ENCODE measurements at regions of chr1 and their contacts with region 1.

Region 1: DNA sequence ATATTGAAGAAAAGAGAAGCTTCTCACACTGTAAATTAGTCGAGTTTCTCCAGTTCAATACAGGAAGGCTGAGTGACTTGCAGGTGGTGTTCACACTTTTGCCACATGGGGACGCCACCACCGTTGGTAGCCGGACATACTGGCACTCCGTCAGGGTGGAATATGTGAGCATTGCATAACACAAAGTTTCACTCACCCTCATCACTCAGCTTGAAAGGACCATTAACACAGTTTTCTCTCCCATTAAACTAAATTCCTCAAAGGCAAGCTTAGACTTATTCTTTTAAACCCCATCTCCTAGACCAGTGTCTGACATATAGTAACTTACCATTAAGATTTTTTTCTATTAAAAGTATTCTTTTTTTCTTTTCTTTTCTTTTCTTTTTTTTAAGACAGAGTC is 105.3 kb upstream of the SERBP1 start:
- DNase-seq: peak; percentile 80
- ATAC-seq: peak; percentile 68
- H3K4me3 ChIP-seq: peak overlapping the region in 1 of 3 experiments; percentile 19; a peak in 1 of 6 replicates
- H3K27ac ChIP-seq: peak overlapping the region; percentile 82
- H3K4me1 ChIP-seq: peaks cover 61% of the 10 kb centered on the region
- H3K27me3 ChIP-seq: no peaks in the 10 kb centered on the region
- CTCF ChIP-seq: peak; percentile 93
- EP300 ChIP-seq: peak in 1 of 2 experiments; percentile 51; a peak in 2 of 4 replicates
- POLR2A ChIP-seq: no peak
- RAD21 ChIP-seq: peak; percentile 90

Region 2: GRCh38 chr1:67430352-67431155 is 104.9 kb before region 1 on chr1 and contains the start of gene SERBP1:
- CTCF ChIA-PET with region 1: no interaction called
- POLR2A ChIA-PET with region 1: interaction called, 12 read pairs
- in situ Hi-C with region 1: no loop called
- intact Hi-C with region 1: no loop called
- DNase-seq: peak; percentile 96
- ATAC-seq: peak; percentile 95
- H3K4me3 ChIP-seq: peak within 1 kb of the TSS; percentile 74 to 96 (median 77)
- H3K27ac ChIP-seq: peak within 1 kb of the TSS; percentile 93
- H3K4me1 ChIP-seq: peaks cover 31% of the 10 kb centered on the region
- H3K27me3 ChIP-seq: no peaks in the 10 kb centered on the region; a peak in 1 of 5 replicates
- CTCF ChIP-seq: no peak
- EP300 ChIP-seq: no peak
- POLR2A ChIP-seq: peak; percentile 79 to 86
- RAD21 ChIP-seq: no peak
- total RNA-seq, gene SERBP1: 281 and 464 TPM in 2 replicates

Region 3: GRCh38 chr1:67524143-67525052 is 11.1 kb before region 1 on chr1:
- CTCF ChIA-PET with region 1: no interaction called
- POLR2A ChIA-PET with region 1: interaction called, 16 read pairs
- in situ Hi-C with region 1: no loop called
- intact Hi-C with region 1: no loop called
- DNase-seq: no peak
- ATAC-seq: peak; percentile 84
- H3K4me3 ChIP-seq: peak overlapping the region in 1 of 3 experiments; percentile 15; a peak in 1 of 6 replicates
- H3K27ac ChIP-seq: peak overlapping the region; percentile 78
- H3K4me1 ChIP-seq: peaks cover 80% of the 10 kb centered on the region
- H3K27me3 ChIP-seq: no peaks in the 10 kb centered on the region
- CTCF ChIP-seq: peak; percentile 46
- EP300 ChIP-seq: no peak
- POLR2A ChIP-seq: no peak
- RAD21 ChIP-seq: no peak

Region 4: GRCh38 chr1:67646145-67647035 is 110.9 kb after region 1 on chr1:
- CTCF ChIA-PET with region 1: no interaction called
- POLR2A ChIA-PET with region 1: interaction called, 3 read pairs
- in situ Hi-C with region 1: no loop called
- intact Hi-C with region 1: loop called (anchors 5 kb)
- DNase-seq: no peak
- ATAC-seq: peak; percentile 64
- H3K4me3 ChIP-seq: peak overlapping the region in 1 of 3 experiments; percentile 29; a peak in 1 of 6 replicates
- H3K27ac ChIP-seq: peak overlapping the region; percentile 0
- H3K4me1 ChIP-seq: peaks cover 49% of the 10 kb centered on the region
- H3K27me3 ChIP-seq: no peaks in the 10 kb centered on the region
- CTCF ChIP-seq: no peak
- EP300 ChIP-seq: no peak
- POLR2A ChIP-seq: no peak
- RAD21 ChIP-seq: no peak

Region 5: DNA sequence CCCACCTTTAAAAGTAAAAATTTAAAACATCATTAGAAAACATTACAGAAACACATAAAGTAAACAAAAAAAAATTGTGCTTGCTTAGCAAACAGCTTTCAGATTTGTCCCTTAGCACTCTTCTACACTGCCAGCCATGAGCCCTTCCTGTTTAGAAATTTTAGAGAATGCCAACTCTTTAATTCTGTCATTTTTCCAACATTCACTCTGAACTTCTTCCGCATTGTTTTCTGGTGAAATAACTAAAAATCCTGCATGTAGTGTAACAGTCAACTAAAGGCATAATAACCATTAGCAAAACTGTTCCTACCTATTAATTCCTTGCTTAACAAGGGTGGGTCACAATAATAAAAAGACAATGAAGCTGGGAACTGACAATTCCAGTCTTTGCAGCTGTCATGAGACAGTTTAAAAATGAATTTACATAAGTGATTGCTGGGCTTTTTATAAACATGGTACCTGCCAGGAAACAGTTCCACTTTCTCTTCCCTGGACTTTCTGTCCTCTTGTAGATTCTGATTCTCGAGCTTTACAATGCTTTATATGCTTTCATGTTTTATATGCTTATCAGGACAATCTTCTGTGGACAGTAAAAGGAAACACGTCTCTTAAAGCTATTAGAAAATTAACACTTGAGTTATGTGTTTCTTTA is 278.8 kb after region 1 on chr1:
- CTCF ChIA-PET with region 1: no interaction called
- POLR2A ChIA-PET with region 1: no interaction called
- in situ Hi-C with region 1: no loop called
- intact Hi-C with region 1: no loop called
- DNase-seq: no peak
- ATAC-seq: no peak
- H3K4me3 ChIP-seq: no peak overlapping the region
- H3K27ac ChIP-seq: no peak overlapping the region
- H3K4me1 ChIP-seq: peaks cover 19% of the 10 kb centered on the region
- H3K27me3 ChIP-seq: no peaks in the 10 kb centered on the region
- CTCF ChIP-seq: no peak
- EP300 ChIP-seq: no peak
- POLR2A ChIP-seq: no peak
- RAD21 ChIP-seq: no peak

Region 6: GRCh38 chr1:67853704-67854103 is 318.2 kb after region 1 on chr1:
- CTCF ChIA-PET with region 1: no interaction called
- POLR2A ChIA-PET with region 1: no interaction called
- in situ Hi-C with region 1: no loop called
- intact Hi-C with region 1: loop called (anchors 10 kb)
- DNase-seq: peak; percentile 25
- ATAC-seq: peak; percentile 94
- H3K4me3 ChIP-seq: no peak overlapping the region
- H3K27ac ChIP-seq: no peak overlapping the region
- H3K4me1 ChIP-seq: no peaks in the 10 kb centered on the region
- H3K27me3 ChIP-seq: peaks cover 0 to 1% of the 10 kb centered on the region in 2 experiments; a peak in 3 of 5 replicates
- CTCF ChIP-seq: peak; percentile 73
- EP300 ChIP-seq: no peak
- POLR2A ChIP-seq: no peak
- RAD21 ChIP-seq: 0 out of 2 replicates have a peak, but pooled peaks have one; percentile 26